ENCODE measurements at regions of chr19 and their contacts with region 1.

Region 1: DNA sequence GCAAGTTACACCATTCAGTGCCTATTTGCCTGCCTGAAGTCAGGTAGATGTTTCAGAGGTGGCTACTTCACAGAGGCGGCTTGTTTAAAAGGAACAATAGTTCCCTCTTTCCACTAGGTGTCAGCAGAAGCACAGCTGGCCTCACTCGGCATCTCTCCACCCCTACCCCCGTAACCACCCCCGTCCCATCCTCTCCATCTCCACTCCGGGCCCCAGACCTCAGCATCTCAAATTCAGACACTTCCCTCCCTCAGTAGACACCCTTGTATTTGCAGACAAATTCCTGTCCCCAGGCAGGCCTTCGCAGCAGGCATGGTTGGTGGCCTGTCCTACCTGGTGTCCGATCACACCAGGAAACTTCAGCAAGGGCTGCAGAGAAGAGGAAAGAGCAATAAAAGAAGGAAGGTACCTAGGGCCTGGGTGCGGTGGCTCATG is 9.1 kb upstream of the DPP9 start:
- DNase-seq: no peak
- ATAC-seq: peak; percentile 93
- H3K4me3 ChIP-seq: no peak overlapping the region
- H3K27ac ChIP-seq: no peak overlapping the region
- H3K4me1 ChIP-seq: no peaks in the 10 kb centered on the region
- H3K27me3 ChIP-seq: peaks cover 4% of the 10 kb centered on the region
- CTCF ChIP-seq: peak; percentile 64

Region 2: GRCh38 chr19:4638828-4639530 is 93.7 kb before region 1 on chr19 and contains the start of gene TNFAIP8L1:
- intact Hi-C with region 1: no loop called
- DNase-seq: peak; percentile 98
- ATAC-seq: peak; percentile 97
- H3K4me3 ChIP-seq: peak within 1 kb of the TSS; percentile 71
- H3K27ac ChIP-seq: peak within 1 kb of the TSS; percentile 78
- H3K4me1 ChIP-seq: peaks cover 20% of the 10 kb centered on the region
- H3K27me3 ChIP-seq: no peaks in the 10 kb centered on the region
- CTCF ChIP-seq: no peak
- total RNA-seq, gene TNFAIP8L1: 11.9 TPM

Region 3: GRCh38 chr19:4776436-4777205 is 43.9 kb after region 1 on chr19:
- intact Hi-C with region 1: no loop called
- DNase-seq: no peak
- ATAC-seq: no peak
- H3K4me3 ChIP-seq: no peak overlapping the region
- H3K27ac ChIP-seq: no peak overlapping the region
- H3K4me1 ChIP-seq: no peaks in the 10 kb centered on the region
- H3K27me3 ChIP-seq: peaks cover 8% of the 10 kb centered on the region
- CTCF ChIP-seq: no peak

Region 4: DNA sequence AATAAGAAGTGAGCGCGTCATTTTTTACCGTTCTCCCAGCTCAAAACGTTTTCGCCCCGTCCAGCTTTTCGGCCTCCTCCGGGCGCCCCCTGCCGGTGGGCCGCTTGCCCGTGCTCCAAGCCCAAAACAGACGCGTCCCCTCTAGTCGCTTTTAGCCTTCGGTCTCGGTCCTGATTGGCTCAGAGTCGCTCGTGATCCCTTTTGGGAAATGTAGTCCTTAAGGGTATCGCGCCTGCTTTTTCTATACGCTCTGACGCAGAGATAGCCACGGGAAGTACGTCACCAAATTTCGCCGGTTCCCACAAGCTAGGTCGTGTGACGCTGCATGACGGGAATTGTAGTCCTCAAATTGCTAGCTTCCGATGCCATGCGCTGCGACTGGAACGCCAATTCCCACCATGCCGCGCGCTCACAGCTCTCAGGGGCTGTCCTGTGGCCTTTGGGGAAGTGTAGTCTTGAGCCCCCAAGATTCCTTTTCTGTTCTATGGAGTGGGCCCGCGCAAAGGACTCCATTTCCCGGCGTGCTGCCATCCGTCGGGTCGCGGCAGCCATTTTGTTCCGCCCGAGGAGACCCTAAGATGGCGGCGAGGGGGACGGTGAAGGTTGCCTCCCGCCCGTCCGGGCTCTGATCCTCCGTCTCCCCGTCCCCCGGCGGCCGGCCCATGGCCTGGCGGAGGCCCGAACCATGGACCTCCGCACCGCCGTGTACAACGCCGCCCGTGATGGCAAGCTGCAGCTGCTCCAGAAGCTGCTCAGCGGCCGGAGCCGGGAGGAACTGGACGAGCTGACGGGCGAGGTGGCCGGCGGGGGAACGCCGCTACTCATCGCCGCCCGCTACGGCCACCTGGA is 58.7 kb after region 1 on chr19 and contains the start of gene FEM1A:
- intact Hi-C with region 1: loop called (anchors 5 kb)
- DNase-seq: peak; percentile 99
- ATAC-seq: peak; percentile 99
- H3K4me3 ChIP-seq: peak within 1 kb of the TSS; percentile 88
- H3K27ac ChIP-seq: peak within 1 kb of the TSS; percentile 92
- H3K4me1 ChIP-seq: peaks cover 27% of the 10 kb centered on the region
- H3K27me3 ChIP-seq: no peaks in the 10 kb centered on the region
- CTCF ChIP-seq: peak; percentile 100
- total RNA-seq, gene FEM1A: 12.4 TPM